ENCODE measurements at regions of chr15 and their contacts with region 1.

Region 1: DNA sequence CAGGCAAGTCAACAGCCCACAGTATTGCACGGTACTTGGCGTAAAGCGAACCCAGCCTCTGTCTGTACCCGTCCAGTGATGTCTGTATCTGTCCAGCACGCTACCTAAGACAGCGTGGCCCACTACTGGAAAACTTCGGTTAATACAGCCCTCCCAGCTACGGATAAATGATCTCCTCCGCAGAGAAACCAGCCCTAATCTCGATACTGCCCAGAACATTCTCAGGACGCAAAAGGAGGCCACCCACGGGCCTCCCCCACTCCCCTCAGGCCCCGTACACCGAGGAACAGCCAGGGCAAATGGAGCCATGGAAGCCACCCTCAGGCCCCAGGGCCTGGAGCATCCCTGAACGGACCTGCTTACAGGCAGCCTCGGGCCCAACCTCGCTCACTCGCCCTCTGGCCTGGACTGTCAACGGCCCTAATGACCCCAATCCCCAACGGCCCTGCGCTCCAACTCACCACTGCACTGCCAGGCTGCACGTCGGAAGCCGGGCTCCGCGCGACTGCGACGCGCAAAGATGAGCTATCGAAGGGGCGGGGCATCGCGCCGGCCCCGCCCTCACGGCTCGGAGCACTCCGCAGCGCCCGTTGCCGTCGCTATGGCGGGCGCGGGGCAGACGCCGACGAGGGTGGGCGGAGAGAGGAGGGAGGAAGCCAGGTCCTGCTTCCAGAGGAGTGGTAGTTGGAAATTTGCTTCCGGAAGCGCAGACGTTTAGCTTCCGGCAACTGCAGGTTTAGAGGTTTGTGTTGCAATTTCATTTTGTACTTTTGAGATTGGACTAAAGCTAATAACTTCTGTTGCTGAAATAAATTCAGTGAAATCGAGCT is at the start of gene SKIC8:
- DNase-seq: peak; percentile 98
- H3K4me3 Mint-ChIP-seq: peak within 1 kb of the TSS; percentile 99
- H3K27ac Mint-ChIP-seq: peak within 1 kb of the TSS; percentile 96
- H3K4me1 Mint-ChIP-seq: peaks cover 22% of the 10 kb centered on the region
- H3K27me3 Mint-ChIP-seq: no peaks in the 10 kb centered on the region
- total RNA-seq, gene SKIC8: 57.6 and 62.2 TPM in 2 replicates

Region 2: GRCh38 chr15:78149068-78149804 is 150.1 kb before region 1 on chr15 and contains the start of gene IDH3A:
- intact Hi-C with region 1: loop called (anchors 1 kb)
- DNase-seq: peak; percentile 100
- H3K4me3 Mint-ChIP-seq: peak within 1 kb of the TSS; percentile 98
- H3K27ac Mint-ChIP-seq: peak within 1 kb of the TSS; percentile 93
- H3K4me1 Mint-ChIP-seq: peaks cover 38% of the 10 kb centered on the region
- H3K27me3 Mint-ChIP-seq: no peaks in the 10 kb centered on the region
- total RNA-seq, gene IDH3A: 165 and 169 TPM in 2 replicates

Region 3: GRCh38 chr15:78264304-78265136 is 34.8 kb before region 1 on chr15 and contains the start of gene DNAJA4:
- intact Hi-C with region 1: loop called (anchors 2 kb)
- DNase-seq: peak; percentile 90
- H3K4me3 Mint-ChIP-seq: peak within 1 kb of the TSS; percentile 90
- H3K27ac Mint-ChIP-seq: peak within 1 kb of the TSS; percentile 89
- H3K4me1 Mint-ChIP-seq: peaks cover 19% of the 10 kb centered on the region
- H3K27me3 Mint-ChIP-seq: no peaks in the 10 kb centered on the region
- total RNA-seq, gene DNAJA4: 74.1 and 75.9 TPM in 2 replicates

Region 4: DNA sequence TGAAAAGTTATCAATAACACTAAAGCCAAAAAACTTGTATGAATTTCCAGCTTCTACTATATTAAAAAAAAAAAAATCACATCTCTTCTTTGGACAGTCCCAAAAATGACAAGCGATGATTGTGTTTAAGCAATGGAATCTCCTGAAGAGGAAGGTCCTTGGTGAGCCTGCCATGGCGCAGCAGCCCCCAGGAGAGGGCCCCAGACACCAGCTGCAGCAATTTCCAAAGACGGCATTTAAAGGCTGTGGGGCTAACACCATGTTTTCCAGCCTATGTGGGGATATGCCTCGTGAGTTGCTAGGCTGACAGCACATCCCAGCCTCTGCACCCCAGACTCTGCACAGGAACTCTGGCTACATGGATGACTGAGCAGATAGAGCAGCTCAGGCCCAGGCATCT is 14.6 kb before region 1 on chr15:
- intact Hi-C with region 1: no loop called
- DNase-seq: no peak
- H3K4me3 Mint-ChIP-seq: no peak overlapping the region
- H3K27ac Mint-ChIP-seq: no peak overlapping the region
- H3K4me1 Mint-ChIP-seq: no peaks in the 10 kb centered on the region
- H3K27me3 Mint-ChIP-seq: no peaks in the 10 kb centered on the region

Region 5: GRCh38 chr15:78340231-78341056 is 41.1 kb after region 1 on chr15 and contains the start of gene CRABP1:
- intact Hi-C with region 1: no loop called
- DNase-seq: no peak
- H3K4me3 Mint-ChIP-seq: no peak within 1 kb of the TSS
- H3K27ac Mint-ChIP-seq: no peak within 1 kb of the TSS
- H3K4me1 Mint-ChIP-seq: no peaks in the 10 kb centered on the region
- H3K27me3 Mint-ChIP-seq: peaks cover 60% of the 10 kb centered on the region
- total RNA-seq, gene CRABP1: not detected in 2 replicates

Measured in activated CD4-positive, alpha-beta T cell treated with anti-CD3 and anti-CD28 coated beads, Interleukin-2, amount 10 ng/mL, durations not matched to agents 24 days and 14 days (primary cell).